ENCODE measurements at regions of chr11 and their contacts with region 1.

Region 1: DNA sequence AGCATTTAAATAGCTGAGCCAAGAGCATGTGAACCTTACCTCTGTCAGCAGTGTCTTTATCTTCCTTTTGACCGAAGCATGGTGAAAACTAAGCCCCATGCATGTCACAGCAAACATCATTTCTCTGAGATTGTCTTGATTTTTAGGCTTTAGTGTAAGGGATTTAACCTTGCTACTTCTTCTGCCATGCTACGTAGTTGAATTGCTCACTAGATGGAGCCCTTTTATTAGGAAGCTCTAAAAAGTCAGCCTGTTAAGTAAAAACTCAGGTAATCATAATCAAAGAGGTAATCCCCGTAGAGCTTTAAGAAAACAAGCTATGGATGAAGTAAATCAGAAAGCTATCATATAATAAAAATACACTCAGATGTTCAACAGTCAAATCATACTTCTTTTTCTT is 149.5 kb downstream of the PGR start:
- DNase-seq: no peak
- H3K4me3 ChIP-seq: no peak overlapping the region
- H3K27ac ChIP-seq: no peak overlapping the region
- H3K4me1 ChIP-seq: no peaks in the 10 kb centered on the region
- H3K27me3 ChIP-seq: no peaks in the 10 kb centered on the region
- CTCF ChIP-seq: peak; percentile 57

Region 2: GRCh38 chr11:100791860-100792259 is 188.3 kb before region 1 on chr11:
- CTCF ChIA-PET with region 1: no interaction called
- POLR2A ChIA-PET with region 1: no interaction called
- intact Hi-C with region 1: no loop called
- DNase-seq: peak in 1 of 2 experiments; percentile 6
- H3K4me3 ChIP-seq: no peak overlapping the region
- H3K27ac ChIP-seq: no peak overlapping the region
- H3K4me1 ChIP-seq: peaks cover 9% of the 10 kb centered on the region
- H3K27me3 ChIP-seq: no peaks in the 10 kb centered on the region
- CTCF ChIP-seq: no peak

Region 3: DNA sequence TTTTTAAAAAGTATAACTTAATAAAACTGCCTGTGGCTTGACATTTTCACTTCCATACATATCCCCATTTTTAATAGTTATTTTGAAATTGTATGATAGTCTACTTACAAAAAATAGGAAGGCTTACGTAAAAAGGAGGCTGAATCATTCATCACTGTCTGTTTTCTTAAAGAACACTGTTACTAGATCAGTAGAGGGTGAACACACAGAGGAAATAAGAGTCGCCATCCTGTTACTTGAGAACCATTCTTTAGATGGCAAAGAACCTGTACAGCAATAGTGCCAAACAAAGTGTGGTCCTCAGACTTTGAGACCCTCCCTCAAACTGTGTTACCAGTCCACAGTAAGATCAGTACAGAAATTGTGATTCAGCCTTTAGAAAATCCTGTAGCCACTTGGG is 31.2 kb before region 1 on chr11:
- CTCF ChIA-PET with region 1: no interaction called
- POLR2A ChIA-PET with region 1: no interaction called
- intact Hi-C with region 1: no loop called
- DNase-seq: no peak
- H3K4me3 ChIP-seq: no peak overlapping the region
- H3K27ac ChIP-seq: no peak overlapping the region
- H3K4me1 ChIP-seq: no peaks in the 10 kb centered on the region
- H3K27me3 ChIP-seq: no peaks in the 10 kb centered on the region
- CTCF ChIP-seq: no peak

Region 4: DNA sequence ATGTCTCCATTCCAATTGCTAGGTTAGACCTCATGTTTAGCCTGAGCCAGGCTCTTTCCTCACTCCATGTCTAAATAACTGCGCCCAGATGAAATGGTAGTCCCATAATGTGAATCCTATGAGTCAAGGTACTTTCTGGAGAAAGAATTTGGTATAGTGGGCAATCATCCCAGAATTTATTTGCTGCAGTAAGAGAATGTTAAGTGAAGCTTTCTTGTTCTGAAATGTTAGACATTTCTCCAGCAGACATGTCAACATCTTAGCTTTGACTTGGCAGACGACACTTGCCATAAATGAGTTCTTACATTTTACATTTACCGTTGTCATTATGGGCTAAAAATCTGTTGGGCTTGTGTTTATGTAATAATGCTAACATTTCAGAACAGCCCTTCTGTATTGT is 15.7 kb before region 1 on chr11:
- CTCF ChIA-PET with region 1: no interaction called
- POLR2A ChIA-PET with region 1: no interaction called
- intact Hi-C with region 1: no loop called
- DNase-seq: no peak
- H3K4me3 ChIP-seq: no peak overlapping the region
- H3K27ac ChIP-seq: no peak overlapping the region
- H3K4me1 ChIP-seq: no peaks in the 10 kb centered on the region
- H3K27me3 ChIP-seq: no peaks in the 10 kb centered on the region
- CTCF ChIP-seq: no peak

Region 5: DNA sequence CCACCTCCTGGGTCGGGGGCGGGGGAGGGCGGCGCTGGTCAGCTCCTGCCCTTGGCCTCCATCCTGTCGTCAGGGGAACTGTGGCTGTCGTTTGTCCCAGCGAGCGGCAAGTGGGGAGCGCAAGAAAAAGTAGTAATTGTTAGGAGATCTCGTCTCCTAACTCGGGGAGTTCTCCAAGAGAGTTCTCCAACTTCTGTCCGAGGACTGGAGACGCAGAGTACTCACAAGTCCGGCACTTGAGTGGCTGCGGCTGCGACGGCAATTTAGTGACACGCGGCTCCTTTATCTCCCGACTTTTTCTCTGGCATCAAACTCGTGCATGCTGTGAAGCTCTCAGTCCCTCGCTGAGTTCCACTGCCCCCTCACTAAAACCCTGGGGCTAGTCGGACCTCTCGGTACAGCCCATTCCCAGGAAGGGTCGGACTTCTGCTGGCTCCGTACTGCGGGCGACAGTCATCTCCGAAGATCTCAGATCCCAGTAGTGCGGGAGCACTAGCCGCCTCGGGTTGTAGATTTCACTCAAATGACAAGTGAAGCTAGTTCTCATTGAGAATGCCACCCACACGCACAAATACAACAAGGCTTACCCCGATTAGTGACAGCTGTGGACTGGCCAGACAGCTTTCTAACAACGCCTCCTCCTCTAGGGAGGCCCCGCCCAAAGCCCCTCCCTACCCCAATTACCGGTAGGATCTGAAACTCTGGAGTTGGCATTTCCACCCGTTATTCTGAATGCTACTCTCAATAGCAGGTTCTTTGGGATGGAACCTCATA is 149.2 kb after region 1 on chr11 and contains the start of gene PGR:
- CTCF ChIA-PET with region 1: interaction called, 25 read pairs
- POLR2A ChIA-PET with region 1: no interaction called
- intact Hi-C with region 1: no loop called
- DNase-seq: no peak
- H3K4me3 ChIP-seq: no peak within 1 kb of the TSS
- H3K27ac ChIP-seq: no peak within 1 kb of the TSS
- H3K4me1 ChIP-seq: no peaks in the 10 kb centered on the region
- H3K27me3 ChIP-seq: no peaks in the 10 kb centered on the region
- CTCF ChIP-seq: no peak
- total RNA-seq, gene PGR: not detected in 2 replicates

Region 6: DNA sequence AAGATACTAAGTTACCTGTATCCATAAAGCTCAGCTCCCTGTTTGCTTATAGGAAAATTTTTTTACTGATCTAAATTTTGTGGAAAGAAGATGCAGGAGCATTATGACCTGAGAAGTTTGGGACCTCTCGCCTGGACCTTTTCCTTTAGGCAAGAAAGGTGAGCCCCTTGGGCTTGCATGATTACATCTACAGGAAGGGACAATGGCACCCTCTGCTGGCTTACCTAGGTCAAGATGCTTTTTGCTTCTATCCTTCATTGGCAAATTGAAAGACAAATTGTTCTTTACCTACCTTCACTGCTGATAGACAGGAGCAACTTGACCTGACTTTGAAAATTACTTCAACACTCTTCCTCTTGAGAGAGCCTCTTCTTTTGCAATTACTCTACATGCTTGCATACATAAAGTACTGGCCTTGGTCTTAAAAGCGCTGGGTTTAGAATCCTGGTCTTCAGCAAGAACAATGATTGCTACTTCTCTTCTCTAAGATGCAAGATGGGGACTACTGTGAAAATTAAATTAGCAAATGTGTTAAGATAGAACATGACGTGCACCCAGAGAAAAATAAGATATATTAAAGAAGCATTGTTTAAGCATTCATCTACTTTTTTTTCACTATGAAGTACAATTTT is 456.5 kb after region 1 on chr11:
- CTCF ChIA-PET with region 1: interaction called, 3 read pairs
- POLR2A ChIA-PET with region 1: no interaction called
- intact Hi-C with region 1: loop called (anchors 1 kb)
- DNase-seq: peak in 1 of 2 experiments; percentile 39
- H3K4me3 ChIP-seq: no peak overlapping the region
- H3K27ac ChIP-seq: no peak overlapping the region
- H3K4me1 ChIP-seq: no peaks in the 10 kb centered on the region
- H3K27me3 ChIP-seq: no peaks in the 10 kb centered on the region
- CTCF ChIP-seq: peak; percentile 79